ENCODE measurements at regions of chr20 and their contacts with region 1.

Region 1: DNA sequence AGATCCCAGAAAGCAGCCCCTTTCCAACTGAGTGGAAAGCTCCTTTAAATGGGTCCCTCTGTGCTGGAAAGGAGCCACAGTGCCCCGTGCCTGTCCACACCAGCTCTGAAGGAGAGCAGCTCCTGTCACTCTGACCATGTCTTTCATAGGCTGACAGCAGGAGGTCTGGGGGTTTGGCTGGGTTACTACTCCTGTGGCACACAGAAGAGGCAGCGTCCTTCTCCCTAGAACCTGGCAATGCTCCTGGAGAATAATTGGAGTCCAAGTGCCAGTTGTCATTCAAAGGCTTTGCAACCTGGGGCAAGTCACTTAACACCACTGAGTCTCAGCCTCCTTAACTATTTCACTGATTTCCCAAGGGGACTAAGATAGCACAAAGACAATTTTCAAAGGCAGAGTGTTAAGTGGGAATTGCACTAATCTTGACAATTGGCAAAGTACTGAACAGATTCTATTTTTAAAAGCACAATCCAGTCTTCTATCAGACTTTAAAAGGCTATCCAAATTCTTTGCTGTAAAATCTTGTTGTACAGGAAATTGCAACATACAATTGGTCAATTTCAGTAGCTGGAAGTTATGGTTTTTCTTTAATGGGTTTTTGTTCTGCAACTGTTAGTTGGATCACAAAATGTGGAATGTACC is 457.2 kb downstream of the KIF16B start:
- DNase-seq: peak; percentile 23
- ATAC-seq: peak in 7 of 8 donors; percentile 35 to 97 (median 56)
- H3K4me3 ChIP-seq: no peak overlapping the region
- H3K27ac ChIP-seq: no peak overlapping the region
- H3K4me1 ChIP-seq: peaks cover 0 to 12% (median 5%) of the 10 kb centered on the region in 9 donors
- H3K27me3 ChIP-seq: peaks cover 0 to 6% (median 0%) of the 10 kb centered on the region in 7 donors
- CTCF ChIP-seq: no peak

Region 2: DNA sequence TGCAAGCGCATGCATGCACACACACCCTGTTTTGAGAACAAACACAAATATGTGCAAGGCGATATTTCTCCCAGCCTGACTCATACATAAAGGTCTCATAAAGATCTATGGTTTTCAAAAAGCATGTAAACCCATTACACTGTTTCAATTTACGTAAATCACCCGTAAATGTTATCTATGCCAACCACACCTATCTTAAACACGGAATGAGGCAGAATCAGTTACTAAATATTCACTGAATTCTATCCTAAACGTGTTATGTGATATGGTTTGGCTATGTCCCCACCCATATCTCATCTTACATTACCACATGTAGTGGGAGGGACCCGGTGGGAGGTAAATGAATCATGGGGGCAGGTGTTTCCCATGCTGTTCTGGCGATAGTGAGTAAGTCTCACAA is 164.4 kb before region 1 on chr20:
- intact Hi-C with region 1: no loop called
- DNase-seq: no peak
- ATAC-seq: no peak
- H3K4me3 ChIP-seq: no peak overlapping the region
- H3K27ac ChIP-seq: no peak overlapping the region
- H3K4me1 ChIP-seq: no peaks in the 10 kb centered on the region
- H3K27me3 ChIP-seq: no peaks in the 10 kb centered on the region
- CTCF ChIP-seq: no peak

Region 3: DNA sequence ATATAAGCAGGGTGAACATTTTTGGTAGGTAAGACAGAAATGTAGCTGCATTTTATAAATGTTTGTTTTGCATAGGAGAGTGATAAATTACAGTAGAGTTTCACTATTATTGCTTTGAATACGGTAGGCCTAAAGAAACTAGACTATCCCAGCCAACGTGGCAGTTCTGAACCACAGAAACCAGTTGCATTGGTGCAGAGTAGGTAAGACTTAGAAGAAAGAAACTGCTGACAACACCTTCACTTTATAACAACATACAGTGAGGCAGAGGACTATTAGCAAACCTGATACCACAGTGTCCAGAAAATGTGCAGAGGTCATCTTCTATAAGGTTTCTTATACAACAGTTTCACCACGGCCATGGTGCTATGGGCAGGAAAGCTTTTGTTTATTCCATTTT is 108.9 kb before region 1 on chr20:
- intact Hi-C with region 1: loop called in 1 of 10 experiments (anchors 10 kb)
- DNase-seq: no peak
- ATAC-seq: no peak
- H3K4me3 ChIP-seq: no peak overlapping the region
- H3K27ac ChIP-seq: no peak overlapping the region
- H3K4me1 ChIP-seq: peaks cover 0 to 13% (median 0%) of the 10 kb centered on the region in 9 donors
- H3K27me3 ChIP-seq: no peaks in the 10 kb centered on the region
- CTCF ChIP-seq: no peak

Region 4: DNA sequence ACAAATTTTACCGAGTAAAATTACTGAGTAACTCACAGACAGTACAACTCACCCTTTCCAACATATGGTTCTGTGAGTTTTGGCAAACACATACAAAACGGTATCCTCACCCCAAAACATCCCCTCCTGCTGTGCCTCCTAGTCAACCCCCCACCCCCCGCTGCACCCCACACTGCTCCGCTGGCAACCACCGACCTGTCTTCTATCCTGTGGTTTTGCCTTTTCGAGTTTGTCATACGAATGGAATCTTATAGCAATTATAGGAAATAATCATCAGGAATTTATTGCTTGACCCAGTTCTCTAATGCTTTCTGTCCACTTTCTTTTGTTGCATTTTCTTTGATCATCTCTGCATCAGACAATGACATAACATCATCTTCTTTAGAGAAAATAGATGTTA is 144.9 kb after region 1 on chr20:
- intact Hi-C with region 1: no loop called
- DNase-seq: no peak
- ATAC-seq: no peak
- H3K4me3 ChIP-seq: no peak overlapping the region
- H3K27ac ChIP-seq: no peak overlapping the region
- H3K4me1 ChIP-seq: peaks cover 0 to 22% (median 4%) of the 10 kb centered on the region in 9 donors
- H3K27me3 ChIP-seq: peaks cover 0 to 3% (median 0%) of the 10 kb centered on the region in 7 donors
- CTCF ChIP-seq: no peak

Measured in heart right ventricle (tissue), 16 donors.